K562 (cell line): ENCODE measurements at regions of chr2 and their contacts with region 1.

Region 1: GRCh38 chr2:157302492-157303099 is 23.0 kb downstream of the ERMN start:
- DNase-seq: peak; percentile 68 to 76 (median 71)
- ATAC-seq: peak; percentile 82
- H3K4me3 ChIP-seq: no peak overlapping the region
- H3K27ac ChIP-seq: no peak overlapping the region
- H3K4me1 ChIP-seq: peaks cover 0 to 17% of the 10 kb centered on the region in 2 experiments; a peak in 2 of 5 replicates
- H3K27me3 ChIP-seq: no peaks in the 10 kb centered on the region
- CTCF ChIP-seq: peak; percentile 76 to 92 (median 79)
- EP300 ChIP-seq: peak; percentile 30; the same call in 1 of the 2 replicates
- POLR2A ChIP-seq: no peak
- RAD21 ChIP-seq: peak; percentile 88 to 89

Region 2: GRCh38 chr2:157269922-157270321 is 32.7 kb before region 1 on chr2:
- CTCF ChIA-PET with region 1: no interaction called
- POLR2A ChIA-PET with region 1: interaction called, 3 read pairs
- in situ Hi-C with region 1: no loop called
- intact Hi-C with region 1: loop called (anchors 2 kb)
- DNase-seq: no peak
- ATAC-seq: peak; percentile 69
- H3K4me3 ChIP-seq: no peak overlapping the region
- H3K27ac ChIP-seq: peak overlapping the region; percentile 52; the same call in 2 of the 3 replicates
- H3K4me1 ChIP-seq: peaks cover 9 to 64% of the 10 kb centered on the region in 2 experiments
- H3K27me3 ChIP-seq: no peaks in the 10 kb centered on the region
- CTCF ChIP-seq: no peak
- EP300 ChIP-seq: no peak
- POLR2A ChIP-seq: no peak
- RAD21 ChIP-seq: no peak

Region 3: DNA sequence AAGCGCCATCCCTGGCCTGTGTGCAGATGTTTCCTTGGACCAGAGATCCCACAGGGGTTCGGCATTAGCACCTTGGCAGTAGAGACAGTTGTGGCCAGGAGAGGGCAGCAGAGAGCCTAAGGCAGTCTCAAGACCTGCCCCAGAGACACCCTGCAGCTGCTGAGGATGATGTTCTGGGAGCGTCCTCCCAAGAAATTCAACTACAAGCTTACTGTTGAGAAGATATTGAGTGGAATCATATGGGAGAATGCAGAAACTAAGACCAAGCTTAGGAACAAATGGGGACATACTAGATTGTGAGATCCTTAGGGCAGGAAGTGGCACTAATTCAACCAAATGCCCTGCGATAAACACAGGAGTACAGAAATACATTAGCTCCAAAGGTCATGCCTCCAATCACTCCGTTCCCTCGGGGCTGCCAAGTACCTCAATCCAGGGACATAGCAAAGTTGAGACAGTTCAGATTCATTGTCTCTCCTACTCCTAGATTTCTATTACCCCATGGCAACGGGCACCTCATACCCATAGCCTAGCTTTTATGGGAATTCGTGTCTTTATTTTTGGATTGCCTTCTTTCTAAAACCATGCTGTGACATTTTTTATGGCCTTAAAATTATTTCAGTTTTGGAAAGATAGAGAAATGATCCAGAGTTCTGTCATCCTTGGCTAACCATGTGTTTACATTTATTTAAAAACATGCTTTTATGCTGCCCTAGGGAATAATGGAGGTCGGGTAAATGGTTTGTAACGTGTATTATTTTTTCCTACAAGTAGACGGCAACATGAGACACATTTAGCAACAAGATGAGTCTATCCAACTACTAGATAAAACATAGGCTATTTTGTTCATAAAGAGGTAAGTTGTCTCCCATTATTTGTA is 25.3 kb after region 1 on chr2:
- CTCF ChIA-PET with region 1: no interaction called
- POLR2A ChIA-PET with region 1: interaction called, 8 read pairs
- in situ Hi-C with region 1: no loop called
- intact Hi-C with region 1: loop called (anchors 1 kb)
- DNase-seq: peak; percentile 86 to 91 (median 90)
- ATAC-seq: peak; percentile 94
- H3K4me3 ChIP-seq: no peak overlapping the region
- H3K27ac ChIP-seq: no peak overlapping the region
- H3K4me1 ChIP-seq: peaks cover 0 to 22% of the 10 kb centered on the region in 2 experiments; a peak in 3 of 5 replicates
- H3K27me3 ChIP-seq: no peaks in the 10 kb centered on the region
- CTCF ChIP-seq: peak; percentile 93 to 99 (median 94)
- EP300 ChIP-seq: no peak
- POLR2A ChIP-seq: no peak
- RAD21 ChIP-seq: peak; percentile 78 to 87

Region 4: GRCh38 chr2:157492189-157492773 is 189.7 kb after region 1 on chr2:
- CTCF ChIA-PET with region 1: no interaction called
- POLR2A ChIA-PET with region 1: no interaction called
- in situ Hi-C with region 1: no loop called
- intact Hi-C with region 1: loop called (anchors 1 kb)
- DNase-seq: peak; percentile 29 to 78 (median 54)
- ATAC-seq: peak; percentile 98
- H3K4me3 ChIP-seq: no peak overlapping the region
- H3K27ac ChIP-seq: no peak overlapping the region
- H3K4me1 ChIP-seq: no peaks in the 10 kb centered on the region
- H3K27me3 ChIP-seq: peaks cover 0 to 4% of the 10 kb centered on the region in 2 experiments; a peak in 1 of 5 replicates
- CTCF ChIP-seq: peak; percentile 84 to 94 (median 87)
- EP300 ChIP-seq: no peak
- POLR2A ChIP-seq: no peak
- RAD21 ChIP-seq: peak; percentile 92 to 96

Region 5: GRCh38 chr2:157523270-157524247 is 221.0 kb after region 1 on chr2:
- CTCF ChIA-PET with region 1: no interaction called
- POLR2A ChIA-PET with region 1: no interaction called
- in situ Hi-C with region 1: no loop called
- intact Hi-C with region 1: no loop called
- DNase-seq: no peak
- ATAC-seq: no peak
- H3K4me3 ChIP-seq: no peak overlapping the region
- H3K27ac ChIP-seq: no peak overlapping the region
- H3K4me1 ChIP-seq: no peaks in the 10 kb centered on the region
- H3K27me3 ChIP-seq: no peaks in the 10 kb centered on the region
- CTCF ChIP-seq: no peak
- EP300 ChIP-seq: no peak
- POLR2A ChIP-seq: no peak
- RAD21 ChIP-seq: no peak

Region 6: DNA sequence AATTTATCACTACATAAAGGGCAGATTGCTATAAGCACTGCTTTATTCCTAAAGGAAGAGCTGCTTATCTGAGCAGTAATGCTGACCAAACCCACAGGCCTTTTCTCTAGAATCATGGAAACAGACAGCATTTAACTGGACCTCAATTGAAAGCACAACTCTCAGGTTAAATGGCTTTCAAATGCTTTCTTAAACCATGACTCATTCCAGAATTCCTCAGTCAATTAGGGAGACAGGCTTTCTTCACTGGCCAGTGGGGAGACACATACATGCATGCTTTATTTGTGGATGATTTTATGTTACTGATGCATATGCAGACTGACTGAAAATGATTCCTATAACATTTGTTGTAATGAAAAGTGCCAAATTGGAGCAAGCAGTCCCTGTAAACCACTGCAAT is 458.9 kb after region 1 on chr2:
- CTCF ChIA-PET with region 1: interaction called, 4 read pairs
- POLR2A ChIA-PET with region 1: interaction called, 5 read pairs
- in situ Hi-C with region 1: no loop called
- intact Hi-C with region 1: loop called (anchors 5 kb)
- DNase-seq: no peak
- ATAC-seq: peak; percentile 25; the same call in 2 of the 3 replicates
- H3K4me3 ChIP-seq: no peak overlapping the region
- H3K27ac ChIP-seq: no peak overlapping the region
- H3K4me1 ChIP-seq: no peaks in the 10 kb centered on the region
- H3K27me3 ChIP-seq: no peaks in the 10 kb centered on the region
- CTCF ChIP-seq: no peak
- EP300 ChIP-seq: no peak
- POLR2A ChIP-seq: no peak
- RAD21 ChIP-seq: no peak